ENCODE measurements at regions of chr14 and their contacts with region 1.

Region 1: GRCh38 chr14:21723431-21724045 is 49.9 kb upstream of the OR4E1 start:
- DNase-seq: peak in 1 of 2 experiments; percentile 4
- H3K4me3 ChIP-seq: no peak overlapping the region
- H3K27ac ChIP-seq: no peak overlapping the region
- H3K4me1 ChIP-seq: no peaks in the 10 kb centered on the region
- H3K27me3 ChIP-seq: no peaks in the 10 kb centered on the region
- CTCF ChIP-seq: no peak

Region 2: DNA sequence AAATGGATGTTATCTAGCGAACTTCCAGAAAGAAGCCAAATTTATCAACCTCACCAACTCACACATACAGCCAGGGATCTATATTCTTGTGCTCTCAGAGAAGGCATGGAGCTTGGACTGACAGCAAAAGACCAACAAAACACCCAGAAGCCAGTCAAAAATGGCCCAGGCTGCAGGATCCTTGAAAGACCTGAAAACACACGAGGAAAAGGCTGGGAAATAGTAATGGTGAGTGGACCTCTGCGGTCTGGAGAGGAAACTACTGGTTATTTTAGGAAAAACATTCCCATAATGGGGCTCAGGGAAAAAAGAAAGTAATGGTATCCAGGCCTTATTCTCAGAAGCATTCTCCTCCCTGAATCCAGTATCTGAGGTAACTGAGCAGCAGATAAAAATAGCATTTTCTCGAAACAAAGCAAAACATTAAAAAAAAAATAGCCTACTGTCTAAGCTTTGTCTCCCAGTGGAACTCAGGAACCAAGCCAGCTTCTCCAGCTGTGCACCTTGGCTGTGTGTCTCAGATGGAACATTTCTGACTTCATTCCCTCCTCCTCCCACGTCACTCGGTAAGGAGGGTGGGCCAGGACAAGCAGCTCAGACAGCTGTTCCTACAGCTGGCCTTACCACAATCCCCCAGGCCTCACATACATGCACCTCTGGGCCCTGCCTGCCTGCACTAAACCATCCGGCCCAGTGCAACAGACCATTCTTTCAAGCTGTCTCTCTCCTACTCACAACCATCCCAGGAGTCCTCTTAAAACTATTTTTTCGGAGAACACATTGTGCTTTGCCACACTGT is 615.6 kb after region 1 on chr14:
- CTCF ChIA-PET with region 1: interaction called, 11 read pairs
- POLR2A ChIA-PET with region 1: no interaction called
- intact Hi-C with region 1: no loop called
- DNase-seq: no peak
- H3K4me3 ChIP-seq: no peak overlapping the region
- H3K27ac ChIP-seq: no peak overlapping the region
- H3K4me1 ChIP-seq: peaks cover 10% of the 10 kb centered on the region
- H3K27me3 ChIP-seq: no peaks in the 10 kb centered on the region
- CTCF ChIP-seq: no peak